ENCODE measurements at regions of chr15 and their contacts with region 1.

Region 1: GRCh38 chr15:78396976-78397375 is 41.0 kb upstream of the IREB2 start:
- DNase-seq: peak; percentile 70
- ATAC-seq: peak; percentile 95
- H3K4me3 ChIP-seq: no peak overlapping the region
- H3K27ac ChIP-seq: no peak overlapping the region
- H3K4me1 ChIP-seq: peaks cover 17% of the 10 kb centered on the region
- H3K27me3 ChIP-seq: peaks cover 0 to 5% of the 10 kb centered on the region in 2 experiments; a peak in 1 of 5 replicates
- CTCF ChIP-seq: peak; percentile 66
- EP300 ChIP-seq: no peak
- POLR2A ChIP-seq: no peak
- RAD21 ChIP-seq: 0 out of 2 replicates have a peak, but pooled peaks have one; percentile 28

Region 2: GRCh38 chr15:78340231-78341056 is 56.5 kb before region 1 on chr15 and contains the start of gene CRABP1:
- CTCF ChIA-PET with region 1: no interaction called
- POLR2A ChIA-PET with region 1: no interaction called
- in situ Hi-C with region 1: no loop called
- intact Hi-C with region 1: loop called (anchors 10 kb)
- DNase-seq: no peak
- ATAC-seq: no peak
- H3K4me3 ChIP-seq: no peak within 1 kb of the TSS
- H3K27ac ChIP-seq: no peak within 1 kb of the TSS
- H3K4me1 ChIP-seq: peaks cover 10% of the 10 kb centered on the region; the same call in 1 of the 2 replicates
- H3K27me3 ChIP-seq: peaks cover 6 to 52% of the 10 kb centered on the region in 2 experiments; a peak in 4 of 5 replicates
- CTCF ChIP-seq: no peak
- EP300 ChIP-seq: no peak
- POLR2A ChIP-seq: no peak
- RAD21 ChIP-seq: no peak
- total RNA-seq, gene CRABP1: not detected in 2 replicates

Region 3: GRCh38 chr15:78449220-78449999 is 52.4 kb after region 1 on chr15:
- CTCF ChIA-PET with region 1: no interaction called
- POLR2A ChIA-PET with region 1: no interaction called
- in situ Hi-C with region 1: no loop called
- intact Hi-C with region 1: no loop called
- DNase-seq: peak; percentile 8
- ATAC-seq: peak; percentile 58; the same call in 2 of the 3 replicates
- H3K4me3 ChIP-seq: no peak overlapping the region
- H3K27ac ChIP-seq: peak overlapping the region; percentile 28
- H3K4me1 ChIP-seq: peaks cover 46% of the 10 kb centered on the region
- H3K27me3 ChIP-seq: no peaks in the 10 kb centered on the region
- CTCF ChIP-seq: no peak
- EP300 ChIP-seq: no peak
- POLR2A ChIP-seq: no peak
- RAD21 ChIP-seq: no peak